CD14-positive monocyte (primary cell): ENCODE measurements at regions of chr2 and their contacts with region 1.

Region 1: GRCh38 chr2:8681786-8682692 is at the start of gene ID2:
- DNase-seq: peak; percentile 99
- H3K4me3 ChIP-seq: peak within 1 kb of the TSS; percentile 93 to 96 (median 95)
- H3K4me3 Mint-ChIP-seq: peak within 1 kb of the TSS; percentile 98 to 99
- H3K27ac ChIP-seq: peak within 1 kb of the TSS; percentile 85 to 89
- H3K27ac Mint-ChIP-seq: peak within 1 kb of the TSS; percentile 93 to 98 (median 97)
- H3K4me1 ChIP-seq: peaks cover 38 to 49% of the 10 kb centered on the region in 2 donors
- H3K4me1 Mint-ChIP-seq: peaks cover 38% of the 10 kb centered on the region
- H3K27me3 ChIP-seq: peaks cover 11 to 26% of the 10 kb centered on the region in 2 donors
- H3K27me3 Mint-ChIP-seq: peaks cover 21 to 34% (median 22%) of the 10 kb centered on the region in 3 donors
- CTCF ChIP-seq: no peak
- polyA plus RNA-seq, gene ID2: 282 to 2,821 (median 295) TPM

Region 2: DNA sequence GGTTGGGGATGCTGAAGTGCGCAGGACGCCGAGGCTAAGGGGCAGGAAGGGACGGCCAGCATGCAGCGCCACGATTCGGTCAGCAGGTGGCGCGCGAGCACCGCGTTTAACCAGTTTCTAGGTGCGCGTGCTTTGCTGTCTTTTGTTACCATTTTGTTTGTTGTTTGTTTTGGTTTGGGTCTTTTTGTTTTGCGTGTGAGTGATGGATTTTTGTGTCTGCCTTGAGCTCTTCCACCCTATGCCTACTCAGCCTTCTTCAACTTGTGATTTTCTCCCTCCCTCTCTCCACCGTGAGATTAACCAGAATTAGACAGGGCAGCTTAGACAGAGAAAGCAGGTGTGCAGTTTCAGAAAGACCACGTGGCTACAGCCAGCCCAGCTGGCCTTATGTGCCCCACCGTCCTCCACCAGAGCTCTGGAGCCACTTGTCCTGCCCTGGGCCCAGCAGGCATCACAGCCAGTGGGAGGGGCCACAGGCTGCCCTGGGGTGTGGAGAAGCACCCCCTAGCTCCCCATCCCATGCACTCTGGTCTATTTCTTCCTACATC is 1584.6 kb before region 1 on chr2:
- intact Hi-C with region 1: loop called in 1 of 2 experiments (anchors 10 kb)
- DNase-seq: peak; percentile 59 to 75 (median 69)
- H3K4me3 ChIP-seq: no peak overlapping the region
- H3K4me3 Mint-ChIP-seq: peak overlapping the region in 1 of 2 donors; percentile 83
- H3K27ac ChIP-seq: no peak overlapping the region
- H3K27ac Mint-ChIP-seq: peak overlapping the region in 3 of 7 donors; percentile 1 to 75 (median 32)
- H3K4me1 ChIP-seq: peaks cover 3 to 4% of the 10 kb centered on the region in 2 donors
- H3K4me1 Mint-ChIP-seq: peaks cover 6% of the 10 kb centered on the region
- H3K27me3 ChIP-seq: no peaks in the 10 kb centered on the region
- H3K27me3 Mint-ChIP-seq: peaks cover 0 to 7% (median 3%) of the 10 kb centered on the region in 3 donors
- CTCF ChIP-seq: peak; percentile 97

Region 3: GRCh38 chr2:8171608-8172007 is 510.4 kb before region 1 on chr2:
- intact Hi-C with region 1: loop called in 1 of 2 experiments (anchors 10 kb)
- DNase-seq: no peak
- H3K4me3 ChIP-seq: no peak overlapping the region
- H3K4me3 Mint-ChIP-seq: no peak overlapping the region
- H3K27ac ChIP-seq: no peak overlapping the region
- H3K27ac Mint-ChIP-seq: no peak overlapping the region
- H3K4me1 ChIP-seq: peaks cover 14 to 24% of the 10 kb centered on the region in 2 donors
- H3K4me1 Mint-ChIP-seq: peaks cover 31% of the 10 kb centered on the region
- H3K27me3 ChIP-seq: no peaks in the 10 kb centered on the region
- H3K27me3 Mint-ChIP-seq: no peaks in the 10 kb centered on the region
- CTCF ChIP-seq: no peak

Region 4: GRCh38 chr2:8525582-8526402 is 156.2 kb before region 1 on chr2:
- intact Hi-C with region 1: loop called (anchors 2 to 5 kb)
- DNase-seq: peak; percentile 77 to 89 (median 86)
- H3K4me3 ChIP-seq: peak overlapping the region in 1 of 3 experiments; percentile 56
- H3K4me3 Mint-ChIP-seq: peak overlapping the region; percentile 50 to 83
- H3K27ac ChIP-seq: peak overlapping the region; percentile 43 to 72
- H3K27ac Mint-ChIP-seq: peak overlapping the region; percentile 68 to 91 (median 87)
- H3K4me1 ChIP-seq: peaks cover 49 to 65% of the 10 kb centered on the region in 2 donors
- H3K4me1 Mint-ChIP-seq: peaks cover 73% of the 10 kb centered on the region
- H3K27me3 ChIP-seq: no peaks in the 10 kb centered on the region
- H3K27me3 Mint-ChIP-seq: peaks cover 0 to 1% (median 0%) of the 10 kb centered on the region in 3 donors
- CTCF ChIP-seq: peak; percentile 78

Region 5: GRCh38 chr2:8567479-8568260 is 114.4 kb before region 1 on chr2:
- intact Hi-C with region 1: no loop called
- DNase-seq: no peak
- H3K4me3 ChIP-seq: no peak overlapping the region
- H3K4me3 Mint-ChIP-seq: no peak overlapping the region
- H3K27ac ChIP-seq: no peak overlapping the region
- H3K27ac Mint-ChIP-seq: peak overlapping the region in 2 of 7 donors; percentile 6 to 32
- H3K4me1 ChIP-seq: no peaks in the 10 kb centered on the region
- H3K4me1 Mint-ChIP-seq: peaks cover 8% of the 10 kb centered on the region
- H3K27me3 ChIP-seq: no peaks in the 10 kb centered on the region
- H3K27me3 Mint-ChIP-seq: peaks cover 0 to 4% (median 4%) of the 10 kb centered on the region in 3 donors
- CTCF ChIP-seq: no peak

Region 6: DNA sequence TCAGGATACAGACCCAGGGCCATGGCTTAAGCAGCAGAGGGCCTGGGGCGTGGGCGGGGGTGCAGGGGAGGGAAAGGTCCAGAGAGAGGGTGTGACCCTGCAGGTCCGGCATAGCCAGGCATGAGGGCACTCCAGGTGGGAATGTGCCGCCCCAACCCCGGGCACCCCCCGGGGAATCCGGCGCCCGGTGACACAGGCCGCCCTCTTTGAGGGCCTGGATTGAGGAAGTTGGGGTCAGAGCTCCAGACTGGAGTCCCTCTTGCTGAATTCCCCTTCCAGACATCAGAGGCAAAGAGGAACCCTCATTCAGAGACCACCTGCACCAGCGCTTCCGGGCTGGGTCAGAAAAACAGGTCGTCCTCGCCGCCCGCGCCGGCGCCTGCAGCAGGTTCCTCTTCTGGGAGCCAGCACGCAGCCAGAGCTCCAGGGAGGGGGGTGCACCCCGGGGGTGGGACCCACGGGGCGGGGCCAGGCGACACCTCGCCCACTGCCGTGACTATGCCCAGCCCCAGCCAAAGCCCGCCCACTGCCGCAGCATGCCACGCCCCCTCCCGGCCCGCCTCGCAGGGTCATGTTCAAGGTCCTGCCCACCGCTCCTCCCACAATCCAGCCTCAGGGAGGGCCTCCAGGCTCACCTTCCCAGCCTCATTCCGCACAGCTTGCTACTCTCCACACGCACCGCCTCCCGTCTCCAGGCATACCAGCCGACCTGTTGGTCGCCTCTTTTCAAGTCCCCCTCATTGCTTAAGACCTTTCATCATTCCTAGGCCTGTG is 98.5 kb before region 1 on chr2:
- intact Hi-C with region 1: loop called in 1 of 2 experiments (anchors 5 kb)
- DNase-seq: peak; percentile 97 to 100 (median 98)
- H3K4me3 ChIP-seq: peak overlapping the region; percentile 3 to 67 (median 22)
- H3K4me3 Mint-ChIP-seq: peak overlapping the region; percentile 80 to 91
- H3K27ac ChIP-seq: peak overlapping the region; percentile 74 to 87
- H3K27ac Mint-ChIP-seq: peak overlapping the region; percentile 92 to 98 (median 96)
- H3K4me1 ChIP-seq: peaks cover 21 to 42% of the 10 kb centered on the region in 2 donors
- H3K4me1 Mint-ChIP-seq: peaks cover 44% of the 10 kb centered on the region
- H3K27me3 ChIP-seq: no peaks in the 10 kb centered on the region
- H3K27me3 Mint-ChIP-seq: peaks cover 4 to 12% (median 11%) of the 10 kb centered on the region in 3 donors
- CTCF ChIP-seq: no peak

Region 7: GRCh38 chr2:8644605-8645175 is 37.3 kb before region 1 on chr2:
- intact Hi-C with region 1: loop called in 1 of 2 experiments (anchors 5 kb)
- DNase-seq: peak; percentile 59 to 86 (median 71)
- H3K4me3 ChIP-seq: peak overlapping the region in 1 of 3 experiments; percentile 51
- H3K4me3 Mint-ChIP-seq: peak overlapping the region in 1 of 2 donors; percentile 26
- H3K27ac ChIP-seq: peak overlapping the region; percentile 23 to 59
- H3K27ac Mint-ChIP-seq: peak overlapping the region in 6 of 7 donors; percentile 31 to 79 (median 66)
- H3K4me1 ChIP-seq: peaks cover 38 to 46% of the 10 kb centered on the region in 2 donors
- H3K4me1 Mint-ChIP-seq: peaks cover 44% of the 10 kb centered on the region
- H3K27me3 ChIP-seq: no peaks in the 10 kb centered on the region
- H3K27me3 Mint-ChIP-seq: peaks cover 0 to 2% (median 1%) of the 10 kb centered on the region in 3 donors
- CTCF ChIP-seq: peak; percentile 77